Sigmoid colon (tissue), 7 donors: ENCODE measurements at regions of chr6 and their contacts with region 1.

Region 1: GRCh38 chr6:148186916-148187315 is 155.7 kb upstream of the SASH1 start:
- DNase-seq: no peak
- H3K4me3 ChIP-seq: no peak overlapping the region
- H3K27ac ChIP-seq: no peak overlapping the region
- H3K4me1 ChIP-seq: peaks cover 0 to 10% (median 5%) of the 10 kb centered on the region in 4 donors
- H3K27me3 ChIP-seq: no peaks in the 10 kb centered on the region
- CTCF ChIP-seq: no peak
- EP300 ChIP-seq: no peak
- POLR2A ChIP-seq: no peak

Region 2: GRCh38 chr6:147868427-147869190 is 318.3 kb before region 1 on chr6:
- intact Hi-C with region 1: no loop called
- DNase-seq: no peak
- H3K4me3 ChIP-seq: no peak overlapping the region
- H3K27ac ChIP-seq: no peak overlapping the region
- H3K4me1 ChIP-seq: no peaks in the 10 kb centered on the region
- H3K27me3 ChIP-seq: no peaks in the 10 kb centered on the region
- CTCF ChIP-seq: no peak
- EP300 ChIP-seq: no peak
- POLR2A ChIP-seq: no peak

Region 3: DNA sequence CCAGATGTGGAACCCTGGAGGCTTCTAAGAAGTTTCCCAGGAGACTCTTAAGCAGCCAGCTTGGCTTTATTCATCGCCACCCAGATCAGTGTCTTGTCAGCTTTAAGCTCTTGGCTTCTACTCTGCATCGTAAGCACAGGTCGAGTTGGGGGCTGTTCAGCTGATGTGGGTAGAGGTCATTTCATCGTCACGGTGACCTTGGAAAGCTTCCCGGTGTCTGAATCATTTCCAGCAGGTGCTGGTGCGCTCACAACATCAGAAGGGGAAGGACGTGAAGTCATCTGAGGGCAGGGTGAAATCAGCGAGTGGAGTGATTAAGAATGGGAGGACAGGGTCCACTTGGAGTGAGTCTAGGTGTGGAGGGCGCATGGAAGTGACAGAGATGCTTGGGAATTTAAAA is 268.3 kb after region 1 on chr6:
- intact Hi-C with region 1: loop called (anchors 5 kb)
- DNase-seq: no peak
- H3K4me3 ChIP-seq: no peak overlapping the region
- H3K27ac ChIP-seq: peak overlapping the region in 1 of 4 donors; percentile 29
- H3K4me1 ChIP-seq: no peaks in the 10 kb centered on the region
- H3K27me3 ChIP-seq: no peaks in the 10 kb centered on the region
- CTCF ChIP-seq: no peak
- EP300 ChIP-seq: no peak
- POLR2A ChIP-seq: no peak